ENCODE measurements at regions of chr5 and their contacts with region 1.

Region 1: GRCh38 chr5:12269164-12269563 is 364.9 kb upstream of the CTNND2 start:
- DNase-seq: no peak
- H3K4me3 ChIP-seq: no peak overlapping the region
- H3K27ac ChIP-seq: no peak overlapping the region
- H3K4me1 ChIP-seq: no peaks in the 10 kb centered on the region
- H3K27me3 ChIP-seq: no peaks in the 10 kb centered on the region
- CTCF ChIP-seq: no peak
- POLR2A ChIP-seq: no peak

Region 2: DNA sequence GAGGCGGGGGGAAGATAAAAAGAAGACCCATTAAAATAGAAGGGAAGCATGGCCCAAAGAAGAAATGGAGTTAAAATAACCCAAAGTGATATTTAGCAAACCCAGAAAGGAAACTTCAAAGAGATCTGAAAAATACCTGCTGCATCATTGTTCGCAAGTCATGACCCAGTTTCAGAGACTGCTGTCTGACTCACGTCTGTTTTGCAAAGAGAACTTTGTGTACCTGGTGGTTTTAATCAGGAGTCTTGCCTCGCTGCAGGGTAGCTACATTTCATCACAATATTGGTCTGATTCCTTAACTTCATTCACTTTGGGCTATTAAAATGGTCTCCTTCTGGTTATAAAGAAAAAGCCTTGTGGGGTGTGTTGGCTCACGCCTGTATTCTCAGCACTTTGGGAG is 1047.0 kb before region 1 on chr5:
- intact Hi-C with region 1: loop called (anchors 5 kb)
- DNase-seq: no peak
- H3K4me3 ChIP-seq: no peak overlapping the region
- H3K27ac ChIP-seq: no peak overlapping the region
- H3K4me1 ChIP-seq: no peaks in the 10 kb centered on the region
- H3K27me3 ChIP-seq: no peaks in the 10 kb centered on the region
- CTCF ChIP-seq: no peak
- POLR2A ChIP-seq: no peak

Measured in breast epithelium (tissue), 4 donors.